ENCODE measurements at regions of chr1 and their contacts with region 1.

Region 1: GRCh38 chr1:153677718-153678505 is 576 bp upstream of the NPR1 start:
- DNase-seq: peak; percentile 85
- H3K4me3 Mint-ChIP-seq: peak overlapping the region; percentile 85
- H3K27ac Mint-ChIP-seq: no peak overlapping the region
- H3K4me1 Mint-ChIP-seq: peaks cover 24% of the 10 kb centered on the region
- H3K27me3 Mint-ChIP-seq: peaks cover 48% of the 10 kb centered on the region

Region 2: GRCh38 chr1:153566440-153567379 is 111.2 kb before region 1 on chr1:
- intact Hi-C with region 1: no loop called
- DNase-seq: peak; percentile 91
- H3K4me3 Mint-ChIP-seq: peak overlapping the region; percentile 63
- H3K27ac Mint-ChIP-seq: peak overlapping the region; percentile 88
- H3K4me1 Mint-ChIP-seq: peaks cover 41% of the 10 kb centered on the region
- H3K27me3 Mint-ChIP-seq: no peaks in the 10 kb centered on the region

Region 3: GRCh38 chr1:153749408-153750005 is 71.6 kb after region 1 on chr1:
- intact Hi-C with region 1: loop called (anchors 1 kb)
- DNase-seq: peak; percentile 94
- H3K4me3 Mint-ChIP-seq: no peak overlapping the region
- H3K27ac Mint-ChIP-seq: no peak overlapping the region
- H3K4me1 Mint-ChIP-seq: peaks cover 6% of the 10 kb centered on the region
- H3K27me3 Mint-ChIP-seq: no peaks in the 10 kb centered on the region

Measured in activated CD4-positive, alpha-beta T cell treated with anti-CD3 and anti-CD28 coated beads, Interleukin-2, amount 10 ng/mL, durations not matched to agents 24 days and 14 days (primary cell).